Mammary epithelial cell (primary cell): ENCODE measurements at regions of chr1 and their contacts with region 1.

Region 1: DNA sequence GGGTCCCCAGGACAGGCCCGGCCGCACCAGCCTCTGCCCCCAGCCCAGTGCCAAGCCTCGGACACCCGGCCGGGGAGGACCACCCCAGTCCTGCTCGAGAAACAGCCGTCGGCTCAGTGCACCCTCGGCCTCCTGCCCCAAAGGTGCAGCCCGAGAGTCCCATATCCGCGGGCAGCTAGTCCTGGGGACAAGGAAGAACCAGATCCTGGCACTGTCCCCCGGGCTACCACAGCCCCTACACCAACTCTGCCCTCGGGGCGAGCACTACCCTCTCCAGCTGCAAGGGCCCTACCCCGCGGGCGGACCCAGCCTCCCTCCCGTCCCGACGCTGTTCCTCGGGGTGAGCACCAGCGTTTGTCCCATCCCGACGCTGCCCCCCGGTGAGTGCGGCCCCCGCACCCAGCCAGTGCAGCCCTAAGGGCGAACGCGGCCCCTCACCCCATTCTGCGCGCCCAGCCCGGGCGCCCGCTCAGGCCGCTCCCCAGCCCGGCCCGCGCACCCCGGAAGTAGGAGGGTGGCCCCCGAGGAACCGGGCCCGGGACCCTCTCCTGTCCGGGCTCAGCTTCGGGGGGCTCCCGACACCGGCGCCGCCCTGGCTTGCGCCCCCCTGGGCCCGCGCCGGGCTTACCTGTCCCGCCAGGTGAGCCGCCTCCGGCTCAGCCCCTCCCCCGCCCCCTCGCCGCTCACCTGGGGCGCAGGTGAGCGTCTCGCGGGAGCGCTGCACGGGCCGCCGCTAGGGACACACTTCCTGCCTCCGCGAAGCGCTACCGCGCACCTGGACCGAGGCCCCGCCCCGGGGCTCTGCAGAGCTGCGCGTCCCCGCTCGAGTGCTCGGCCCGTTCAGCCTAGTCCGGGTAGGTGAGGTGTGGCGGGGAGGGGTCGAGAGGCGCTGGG is at the start of gene KDF1:
- DNase-seq: peak; percentile 87
- H3K4me3 ChIP-seq: peak within 1 kb of the TSS; percentile 92 to 99 (median 98)
- H3K27ac ChIP-seq: peak within 1 kb of the TSS; percentile 85
- H3K4me1 ChIP-seq: peaks cover 33% of the 10 kb centered on the region
- H3K27me3 ChIP-seq: no peaks in the 10 kb centered on the region
- CTCF ChIP-seq: no peak
- total RNA-seq, gene KDF1: 15.2 to 24.7 TPM

Region 2: DNA sequence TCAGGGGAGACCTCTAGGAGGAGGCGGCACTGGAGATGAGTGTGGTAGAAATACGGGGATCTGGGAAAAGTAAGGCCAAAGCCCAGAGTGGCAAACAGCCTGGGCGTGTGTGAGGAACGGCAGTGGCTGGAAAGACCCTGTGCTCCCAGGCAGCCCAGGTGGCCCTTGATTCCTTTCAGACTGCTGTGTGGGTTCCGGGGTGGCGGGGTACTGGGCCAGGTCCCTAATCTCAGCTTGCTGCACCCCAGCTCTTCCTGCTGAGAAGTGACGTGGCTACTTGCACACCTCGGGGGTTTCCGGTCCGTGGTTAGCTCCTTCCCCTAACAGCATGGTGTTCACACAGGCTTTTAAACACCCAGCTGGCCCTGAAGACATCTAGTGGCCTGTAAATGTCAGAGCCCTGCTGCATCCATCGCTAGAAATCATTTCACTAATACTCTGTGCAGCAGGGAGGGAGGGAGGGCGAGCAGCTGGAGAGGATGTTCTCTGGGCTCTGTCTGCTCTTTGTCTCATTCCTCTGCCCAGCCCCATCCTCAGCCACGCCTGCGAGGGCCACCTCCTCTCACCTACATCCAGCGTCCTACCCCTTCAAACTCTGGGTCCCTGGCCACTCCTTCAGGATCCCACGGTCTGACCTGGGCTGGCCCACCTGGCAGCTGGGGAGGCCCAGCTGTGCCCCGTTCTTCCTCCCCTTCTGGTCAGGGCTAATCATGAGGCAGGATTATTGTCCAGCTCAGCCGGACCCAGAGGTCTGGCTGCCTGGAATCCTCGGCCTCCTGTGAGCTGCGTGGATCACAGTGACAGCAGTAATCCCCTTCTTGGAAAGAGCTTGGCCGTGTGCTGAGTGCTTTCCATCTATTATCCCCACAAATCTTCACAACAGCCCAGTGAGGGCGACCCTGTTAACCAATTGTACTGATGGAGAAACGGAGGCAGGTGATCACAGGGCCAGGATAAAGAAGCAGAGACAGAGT is 126.2 kb before region 1 on chr1:
- CTCF ChIA-PET with region 1: no interaction called
- dilution Hi-C with region 1: no loop called
- in situ Hi-C with region 1: no loop called
- intact Hi-C with region 1: no loop called
- DNase-seq: no peak
- H3K4me3 ChIP-seq: no peak overlapping the region
- H3K27ac ChIP-seq: no peak overlapping the region
- H3K4me1 ChIP-seq: no peaks in the 10 kb centered on the region
- H3K27me3 ChIP-seq: no peaks in the 10 kb centered on the region
- CTCF ChIP-seq: no peak

Region 3: DNA sequence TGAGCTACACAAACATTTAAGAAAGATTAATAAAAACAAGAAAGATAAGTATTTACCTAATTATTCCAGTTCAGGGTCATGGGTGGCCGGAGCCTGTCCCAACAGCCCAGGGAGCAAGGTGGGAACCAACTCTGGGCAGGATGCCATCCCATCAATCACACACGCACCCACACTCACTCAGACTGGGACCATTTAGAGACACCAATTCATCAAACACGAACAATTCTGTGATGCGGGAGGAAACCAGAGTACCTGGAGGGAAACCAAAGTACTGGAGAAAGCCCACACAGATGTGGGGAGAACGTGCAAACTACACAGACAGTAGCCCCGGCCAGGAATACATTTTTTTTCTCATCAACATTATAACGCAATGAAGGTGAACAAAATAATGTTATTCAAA is 513.8 kb after region 1 on chr1:
- CTCF ChIA-PET with region 1: interaction called, 34 read pairs
- dilution Hi-C with region 1: no loop called
- in situ Hi-C with region 1: no loop called
- intact Hi-C with region 1: no loop called
- DNase-seq: no peak
- H3K4me3 ChIP-seq: no peak overlapping the region
- H3K27ac ChIP-seq: no peak overlapping the region
- H3K4me1 ChIP-seq: peaks cover 7% of the 10 kb centered on the region
- H3K27me3 ChIP-seq: no peaks in the 10 kb centered on the region
- CTCF ChIP-seq: no peak